ENCODE measurements at regions of chr21 and their contacts with region 1.

Region 1: DNA sequence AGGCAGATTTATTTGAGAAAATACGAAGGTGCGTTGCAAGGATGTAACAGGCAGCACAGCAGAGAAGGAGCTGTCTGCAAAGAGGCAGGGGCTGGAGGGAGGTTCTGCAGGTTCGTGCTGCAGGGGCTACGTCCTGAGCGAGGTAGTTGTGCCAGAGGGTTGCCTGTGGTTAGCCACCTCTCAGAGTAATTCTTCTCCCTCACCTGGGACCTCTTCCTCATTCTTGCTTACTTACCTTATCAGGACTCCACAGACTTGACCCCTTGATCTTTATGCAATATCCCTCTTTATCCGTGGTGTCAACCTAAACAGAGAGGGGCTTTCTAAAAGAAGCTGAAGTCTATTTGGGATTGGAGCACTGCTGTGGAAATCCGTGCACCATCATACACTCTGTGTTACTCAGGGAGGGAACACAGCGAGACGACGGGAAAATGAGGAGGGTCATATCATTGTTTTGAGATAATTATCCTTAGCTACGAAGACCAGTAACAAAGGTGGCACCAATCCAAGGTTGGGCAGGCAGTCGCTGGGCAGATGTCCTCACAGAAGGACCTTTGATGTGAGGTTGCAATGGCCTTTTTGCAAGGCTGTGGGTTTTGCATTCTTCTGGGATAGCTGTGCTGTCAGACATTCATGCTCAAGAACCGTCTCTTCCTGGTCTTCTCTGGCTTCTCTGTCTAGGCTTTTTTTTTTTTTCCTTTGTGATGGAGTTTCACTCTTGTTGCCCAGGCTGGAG is 82.8 kb downstream of the WDR4 start:
- DNase-seq: peak; percentile 48 to 82
- H3K4me3 ChIP-seq: peak overlapping the region; percentile 1; the same call in 1 of the 2 replicates
- H3K27ac ChIP-seq: peak overlapping the region; percentile 16
- H3K4me1 ChIP-seq: peaks cover 33% of the 10 kb centered on the region
- H3K27me3 ChIP-seq: no peaks in the 10 kb centered on the region
- CTCF ChIP-seq: no peak

Region 2: GRCh38 chr21:42724226-42724920 is 72.1 kb before region 1 on chr21:
- CTCF ChIA-PET with region 1: no interaction called
- POLR2A ChIA-PET with region 1: no interaction called
- intact Hi-C with region 1: loop called (anchors 1 kb)
- DNase-seq: peak; percentile 81 to 95
- H3K4me3 ChIP-seq: no peak overlapping the region
- H3K27ac ChIP-seq: peak overlapping the region; percentile 84
- H3K4me1 ChIP-seq: peaks cover 31% of the 10 kb centered on the region
- H3K27me3 ChIP-seq: no peaks in the 10 kb centered on the region
- CTCF ChIP-seq: no peak

Region 3: GRCh38 chr21:42811960-42812359 is 15.5 kb after region 1 on chr21:
- CTCF ChIA-PET with region 1: no interaction called
- POLR2A ChIA-PET with region 1: no interaction called
- intact Hi-C with region 1: loop called (anchors 1 kb)
- DNase-seq: no peak
- H3K4me3 ChIP-seq: no peak overlapping the region
- H3K27ac ChIP-seq: no peak overlapping the region
- H3K4me1 ChIP-seq: peaks cover 14% of the 10 kb centered on the region
- H3K27me3 ChIP-seq: no peaks in the 10 kb centered on the region
- CTCF ChIP-seq: no peak